Adrenal gland (tissue), 19 donors: ENCODE measurements at regions of chr12 and their contacts with region 1.

Region 1: GRCh38 chr12:121697098-121697698 is 15.4 kb upstream of the TMEM120B start:
- DNase-seq: peak in 1 of 7 donors; percentile 44
- H3K4me3 ChIP-seq: no peak overlapping the region
- H3K27ac ChIP-seq: no peak overlapping the region
- H3K4me1 ChIP-seq: no peaks in the 10 kb centered on the region
- H3K27me3 ChIP-seq: no peaks in the 10 kb centered on the region
- CTCF ChIP-seq: peak; percentile 55 to 82 (median 70)
- POLR2A ChIP-seq: no peak

Region 2: DNA sequence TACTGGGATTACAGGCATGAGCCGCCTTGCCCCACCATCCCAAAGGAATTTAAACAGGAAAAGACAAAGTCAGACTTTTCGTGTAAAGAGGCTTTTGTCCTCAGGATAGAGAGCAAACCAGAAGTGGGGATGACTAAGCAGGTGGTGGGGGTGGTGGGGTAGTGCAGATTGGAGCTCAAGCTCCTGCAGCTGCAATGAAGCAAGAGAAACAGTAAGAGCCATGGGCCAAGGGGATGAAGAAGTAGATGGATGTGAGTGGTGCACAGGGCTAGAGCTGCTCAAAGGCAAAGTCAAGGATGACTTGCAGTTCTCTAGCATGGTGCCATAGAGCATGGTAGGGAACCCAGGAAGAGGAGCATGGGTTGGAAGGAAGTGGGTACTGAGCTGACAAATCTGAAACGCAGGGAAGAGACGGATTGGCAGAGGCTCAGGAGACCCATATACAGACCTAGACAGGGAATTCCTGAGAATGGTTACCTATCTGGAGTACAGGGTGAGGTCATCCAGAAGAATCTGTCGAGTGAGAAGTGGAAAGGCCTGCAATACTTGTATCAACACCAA is 308.7 kb before region 1 on chr12:
- intact Hi-C with region 1: no loop called
- DNase-seq: no peak
- H3K4me3 ChIP-seq: no peak overlapping the region
- H3K27ac ChIP-seq: no peak overlapping the region
- H3K4me1 ChIP-seq: no peaks in the 10 kb centered on the region
- H3K27me3 ChIP-seq: no peaks in the 10 kb centered on the region
- CTCF ChIP-seq: no peak
- POLR2A ChIP-seq: no peak

Region 3: DNA sequence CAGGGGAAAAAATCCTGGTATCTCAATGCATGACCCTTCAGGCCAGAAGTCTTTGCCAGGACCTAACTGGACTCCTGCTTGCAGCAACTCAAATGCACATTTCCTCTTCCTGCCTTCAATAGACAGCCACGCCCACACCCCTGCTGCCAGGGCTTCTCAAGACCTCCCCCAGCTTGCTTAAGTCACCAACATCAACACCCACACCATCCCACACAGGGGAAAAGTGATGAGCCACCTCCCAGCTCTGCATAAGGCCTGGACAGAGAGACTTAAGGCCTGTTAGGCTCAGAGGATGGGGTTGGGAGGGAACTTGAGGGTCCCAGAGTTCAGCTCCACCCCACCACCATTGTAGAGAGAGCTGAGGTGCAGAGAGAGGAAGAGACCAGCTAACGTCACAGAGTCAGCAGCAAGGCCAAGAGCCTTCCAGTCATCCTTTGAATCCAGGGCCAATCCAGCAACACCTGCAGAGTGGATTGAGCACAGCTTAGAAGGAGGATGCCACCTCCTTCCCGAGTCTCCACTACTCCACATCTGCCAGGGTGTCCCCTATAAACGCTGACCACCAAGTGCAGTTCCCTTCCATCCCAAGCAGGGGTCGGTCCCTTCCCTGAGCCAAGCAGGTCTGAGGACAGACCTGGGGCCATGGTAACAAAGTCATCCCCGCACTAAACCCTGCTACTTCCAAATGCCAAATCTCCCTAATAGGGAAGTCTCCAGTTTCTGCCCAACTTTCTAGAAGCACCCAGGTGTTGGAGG is 166.4 kb before region 1 on chr12:
- intact Hi-C with region 1: no loop called
- DNase-seq: peak in 6 of 7 donors; percentile 59 to 80 (median 64)
- H3K4me3 ChIP-seq: no peak overlapping the region
- H3K27ac ChIP-seq: peak overlapping the region in 2 of 5 donors; percentile 12 to 52
- H3K4me1 ChIP-seq: peaks cover 6 to 22% of the 10 kb centered on the region in 2 donors
- H3K27me3 ChIP-seq: no peaks in the 10 kb centered on the region
- CTCF ChIP-seq: no peak
- POLR2A ChIP-seq: no peak

Region 4: GRCh38 chr12:121773011-121773777 is 76.0 kb after region 1 on chr12:
- intact Hi-C with region 1: loop called (anchors 2 kb)
- DNase-seq: peak; percentile 67 to 87 (median 80)
- H3K4me3 ChIP-seq: no peak overlapping the region
- H3K27ac ChIP-seq: peak overlapping the region in 1 of 5 donors; percentile 4
- H3K4me1 ChIP-seq: peaks cover 9 to 16% of the 10 kb centered on the region in 2 donors
- H3K27me3 ChIP-seq: no peaks in the 10 kb centered on the region
- CTCF ChIP-seq: peak; percentile 64 to 95 (median 92)
- POLR2A ChIP-seq: no peak

Region 5: DNA sequence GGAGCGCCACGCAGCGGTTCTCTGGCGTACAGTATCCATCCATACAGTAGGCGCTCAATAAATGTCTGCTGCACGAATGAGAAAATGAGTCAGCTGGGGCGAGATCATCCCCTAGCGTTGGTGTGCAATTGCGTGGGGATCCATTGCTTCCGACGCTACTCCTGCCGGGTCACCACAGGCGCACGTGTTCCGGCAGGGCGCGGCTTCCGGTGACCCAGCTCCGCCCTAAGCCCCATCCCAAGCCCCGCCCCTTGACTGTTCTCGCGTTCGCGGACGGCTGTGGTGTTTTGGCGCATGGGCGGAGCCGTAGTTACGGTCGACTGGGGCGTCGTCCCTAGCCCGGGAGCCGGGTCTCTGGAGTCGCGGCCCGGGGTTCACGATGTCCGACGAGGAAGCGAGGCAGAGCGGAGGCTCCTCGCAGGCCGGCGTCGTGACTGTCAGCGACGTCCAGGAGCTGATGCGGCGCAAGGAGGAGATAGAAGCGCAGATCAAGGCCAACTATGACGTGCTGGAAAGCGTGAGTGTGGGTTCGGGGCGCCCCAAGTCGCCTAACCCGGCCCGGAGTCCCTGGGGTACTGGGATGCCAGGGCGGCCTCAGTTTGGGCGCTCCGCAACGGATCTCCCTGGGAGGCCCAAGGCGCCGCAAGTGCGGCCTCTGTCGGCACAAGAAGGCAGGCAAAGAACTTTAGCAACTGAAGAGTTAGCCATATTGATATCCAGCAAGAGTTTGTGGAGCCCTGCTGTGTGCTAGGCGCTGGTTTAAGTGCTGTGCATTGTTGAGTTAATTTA is 191.5 kb after region 1 on chr12 and contains the start of gene PSMD9:
- intact Hi-C with region 1: loop called in 1 of 2 experiments (anchors 10 kb)
- DNase-seq: peak; percentile 98
- H3K4me3 ChIP-seq: peak within 1 kb of the TSS; percentile 31 to 64 (median 50)
- H3K27ac ChIP-seq: peak within 1 kb of the TSS; percentile 77 to 99 (median 92)
- H3K4me1 ChIP-seq: peaks cover 19 to 38% of the 10 kb centered on the region in 2 donors
- H3K27me3 ChIP-seq: no peaks in the 10 kb centered on the region
- CTCF ChIP-seq: peak; percentile 46 to 72 (median 60)
- POLR2A ChIP-seq: peak; percentile 77 to 89
- total RNA-seq, gene PSMD9: 45.3 to 145 (median 58.4) TPM